H1 (cell line): ENCODE measurements at regions of chr18 and their contacts with region 1.

Region 1: DNA sequence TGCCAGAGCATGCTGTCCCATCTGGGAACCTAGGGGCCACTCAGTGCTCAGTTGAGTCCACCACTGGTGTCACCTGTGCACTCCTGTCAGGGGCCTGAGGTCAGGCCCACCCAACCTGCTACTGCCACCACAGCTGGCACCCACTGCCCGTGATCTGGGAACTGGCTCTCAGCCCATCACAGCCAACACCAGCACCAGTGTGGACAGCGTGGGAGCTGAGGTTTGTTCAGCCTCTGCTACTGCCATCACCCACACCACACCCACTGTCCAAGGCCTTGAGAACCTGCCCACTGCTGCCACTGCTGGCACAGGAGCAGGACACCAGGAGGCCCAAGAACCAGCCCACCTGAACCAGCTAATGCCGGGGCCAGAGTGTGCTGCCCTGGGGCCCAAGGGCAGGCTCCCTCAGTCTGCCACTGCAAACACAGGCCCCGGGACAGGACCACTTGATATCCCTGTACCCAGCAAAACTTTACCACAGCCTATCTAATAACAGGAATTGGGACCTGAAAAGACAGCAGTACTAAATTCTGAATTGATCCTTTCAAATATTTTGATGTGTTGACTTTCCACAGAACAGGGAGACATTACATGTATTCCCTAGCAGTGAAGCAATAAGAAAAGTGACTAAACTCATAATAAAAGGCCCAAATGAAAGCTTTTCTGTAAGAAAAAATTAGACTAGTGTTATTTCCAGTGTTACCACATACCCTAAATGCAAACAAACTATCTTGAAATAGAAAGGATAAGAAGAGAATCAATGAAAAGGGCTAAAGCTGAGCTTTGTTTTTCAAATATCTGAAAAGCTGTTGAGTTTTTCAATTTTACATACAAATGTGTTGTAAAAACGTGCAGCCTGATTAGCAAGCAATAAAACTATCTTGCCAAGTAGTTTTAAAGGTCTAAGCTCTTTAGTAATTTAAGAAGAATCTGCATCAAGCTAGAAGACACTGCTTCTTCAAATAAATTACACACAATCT is 640.7 kb downstream of the METTL4 start:
- DNase-seq: no peak
- H3K4me3 ChIP-seq: no peak overlapping the region
- H3K27ac ChIP-seq: no peak overlapping the region
- H3K4me1 ChIP-seq: peaks cover 0 to 3% (median 0%) of the 10 kb centered on the region in 4 experiments; a peak in 1 of 7 replicates
- H3K27me3 ChIP-seq: no peaks in the 10 kb centered on the region
- CTCF ChIP-seq: no peak
- EP300 ChIP-seq: no peak
- POLR2A ChIP-seq: no peak
- RAD21 ChIP-seq: no peak

Region 2: GRCh38 chr18:1914490-1914889 is 16.1 kb before region 1 on chr18:
- CTCF ChIA-PET with region 1: interaction called, 11 read pairs
- POLR2A ChIA-PET with region 1: no interaction called
- DNase-seq: no peak
- H3K4me3 ChIP-seq: no peak overlapping the region
- H3K27ac ChIP-seq: no peak overlapping the region
- H3K4me1 ChIP-seq: no peaks in the 10 kb centered on the region
- H3K27me3 ChIP-seq: no peaks in the 10 kb centered on the region
- CTCF ChIP-seq: peak in 2 of 3 experiments; percentile 63 to 71; a peak in 3 of 4 replicates
- EP300 ChIP-seq: no peak
- POLR2A ChIP-seq: no peak
- RAD21 ChIP-seq: peak; percentile 74 to 79

Region 3: DNA sequence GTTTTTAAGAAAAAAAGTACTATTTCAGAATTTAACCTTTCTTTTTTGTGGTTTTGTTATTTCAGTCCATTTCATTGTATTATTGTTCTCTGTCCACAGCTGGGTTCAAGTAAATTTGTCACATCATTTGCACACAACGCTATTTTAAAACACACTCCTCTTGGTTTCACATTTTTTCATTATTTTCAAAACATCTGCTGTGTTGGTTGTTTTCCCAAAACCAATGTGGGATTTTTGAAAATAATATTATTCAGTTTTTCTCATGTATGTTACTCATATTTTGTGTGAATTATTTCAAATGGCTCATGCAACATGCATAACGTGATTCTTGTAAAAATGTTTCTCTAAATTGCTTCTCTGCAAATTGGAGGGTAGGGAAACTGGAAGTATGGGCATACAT is 51.5 kb after region 1 on chr18:
- CTCF ChIA-PET with region 1: no interaction called
- POLR2A ChIA-PET with region 1: no interaction called
- DNase-seq: no peak
- H3K4me3 ChIP-seq: no peak overlapping the region
- H3K27ac ChIP-seq: no peak overlapping the region
- H3K4me1 ChIP-seq: no peaks in the 10 kb centered on the region
- H3K27me3 ChIP-seq: no peaks in the 10 kb centered on the region
- CTCF ChIP-seq: no peak
- EP300 ChIP-seq: no peak
- POLR2A ChIP-seq: no peak
- RAD21 ChIP-seq: no peak